IMR-90 (cell line): ENCODE measurements at regions of chr2 and their contacts with region 1.

Region 1: GRCh38 chr2:111534816-111535803 is 348.9 kb downstream of the ANAPC1 start:
- DNase-seq: peak; percentile 56
- ATAC-seq: peak; percentile 14
- H3K4me3 ChIP-seq: no peak overlapping the region
- H3K27ac ChIP-seq: peak overlapping the region; percentile 99
- H3K4me1 ChIP-seq: peaks cover 23% of the 10 kb centered on the region
- H3K27me3 ChIP-seq: no peaks in the 10 kb centered on the region
- CTCF ChIP-seq: no peak
- POLR2A ChIP-seq: no peak
- RAD21 ChIP-seq: no peak

Region 2: GRCh38 chr2:111694700-111695101 is 159.6 kb after region 1 on chr2:
- CTCF ChIA-PET with region 1: no interaction called
- POLR2A ChIA-PET with region 1: interaction called, 15 read pairs
- dilution Hi-C with region 1: no loop called
- in situ Hi-C with region 1: no loop called
- intact Hi-C with region 1: no loop called
- DNase-seq: peak; percentile 87
- ATAC-seq: no peak
- H3K4me3 ChIP-seq: no peak overlapping the region
- H3K27ac ChIP-seq: no peak overlapping the region
- H3K4me1 ChIP-seq: peaks cover 6% of the 10 kb centered on the region
- H3K27me3 ChIP-seq: peaks cover 13% of the 10 kb centered on the region
- CTCF ChIP-seq: no peak
- POLR2A ChIP-seq: no peak
- RAD21 ChIP-seq: no peak